ENCODE measurements at regions of chr5 and their contacts with region 1.

Region 1: DNA sequence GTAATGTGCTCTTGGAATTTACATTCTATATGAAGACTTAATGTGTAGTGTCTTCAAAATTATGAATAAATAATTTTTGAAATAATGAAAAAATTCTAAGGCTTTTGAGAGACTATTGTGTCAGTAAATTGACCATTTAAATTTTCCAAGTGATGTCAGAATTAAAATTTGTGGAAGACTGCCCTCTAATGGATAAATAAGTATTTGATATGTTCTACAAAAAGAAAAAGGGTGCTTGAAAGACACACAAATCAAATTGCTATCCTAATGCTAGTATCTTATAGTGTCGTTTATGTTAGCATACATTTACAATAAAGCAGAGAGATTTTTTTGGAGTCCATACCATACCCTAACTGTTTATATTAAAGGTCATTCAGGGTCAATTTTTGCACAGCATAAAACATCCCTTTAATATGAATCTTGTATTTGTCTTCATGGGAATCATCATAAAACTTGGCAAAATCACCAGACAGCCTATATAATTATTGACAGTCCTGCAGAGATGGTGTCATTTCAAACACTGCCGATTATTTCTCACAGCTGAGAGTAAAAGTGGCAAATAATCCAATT is 120.8 kb upstream of the SLC27A6 start:
- DNase-seq: no peak
- H3K4me3 ChIP-seq: no peak overlapping the region
- H3K4me3 Mint-ChIP-seq: no peak overlapping the region
- H3K27ac ChIP-seq: no peak overlapping the region
- H3K27ac Mint-ChIP-seq: no peak overlapping the region
- H3K4me1 ChIP-seq: no peaks in the 10 kb centered on the region
- H3K4me1 Mint-ChIP-seq: no peaks in the 10 kb centered on the region
- H3K27me3 ChIP-seq: no peaks in the 10 kb centered on the region
- H3K27me3 Mint-ChIP-seq: peaks cover 0 to 2% of the 10 kb centered on the region in 2 donors

Region 2: DNA sequence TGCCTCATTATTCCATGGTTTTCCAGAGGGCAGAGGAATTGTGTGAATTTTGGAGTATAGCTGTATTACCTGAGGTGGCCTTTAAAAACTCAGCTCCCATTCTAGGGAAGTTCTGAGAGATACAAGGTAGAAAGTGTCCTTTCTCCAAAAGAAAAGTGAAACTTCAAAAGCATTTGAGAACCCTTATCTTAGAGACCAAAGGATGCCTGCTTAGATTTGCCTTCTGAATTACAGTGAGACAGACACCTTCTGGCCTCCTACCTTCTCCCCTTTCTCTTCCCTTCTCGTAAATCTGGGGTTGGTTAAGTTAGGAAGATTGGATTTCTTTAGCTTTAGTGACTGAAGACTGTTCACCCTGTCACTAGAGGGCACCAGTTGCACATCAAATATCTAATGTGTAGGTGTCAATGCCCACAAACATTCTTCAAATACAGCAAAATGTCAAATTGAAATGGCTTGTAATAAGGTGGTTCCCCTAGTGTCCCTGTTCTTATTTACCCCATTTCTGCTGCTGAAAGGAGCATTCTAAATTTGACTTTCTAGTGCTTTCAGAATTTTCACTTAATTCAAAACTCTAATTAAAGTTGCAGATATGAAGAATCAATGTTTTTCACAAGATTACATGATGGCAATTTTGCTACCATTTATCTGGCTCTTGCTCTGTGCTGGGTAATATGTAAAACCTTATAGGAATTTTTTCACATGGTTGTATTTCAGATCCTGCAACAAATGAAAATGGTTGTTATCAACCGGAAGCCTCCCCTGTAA is 1280.3 kb before region 1 on chr5:
- CTCF ChIA-PET with region 1: no interaction called
- POLR2A ChIA-PET with region 1: no interaction called
- intact Hi-C with region 1: loop called (anchors 2 kb)
- DNase-seq: peak; percentile 42 to 57 (median 51)
- H3K4me3 ChIP-seq: no peak overlapping the region
- H3K4me3 Mint-ChIP-seq: no peak overlapping the region
- H3K27ac ChIP-seq: no peak overlapping the region
- H3K27ac Mint-ChIP-seq: no peak overlapping the region
- H3K4me1 ChIP-seq: no peaks in the 10 kb centered on the region
- H3K4me1 Mint-ChIP-seq: peaks cover 0 to 8% (median under 1%) of the 10 kb centered on the region in 4 donors
- H3K27me3 ChIP-seq: peaks cover 3% of the 10 kb centered on the region
- H3K27me3 Mint-ChIP-seq: peaks cover 4 to 27% of the 10 kb centered on the region in 2 donors

Region 3: DNA sequence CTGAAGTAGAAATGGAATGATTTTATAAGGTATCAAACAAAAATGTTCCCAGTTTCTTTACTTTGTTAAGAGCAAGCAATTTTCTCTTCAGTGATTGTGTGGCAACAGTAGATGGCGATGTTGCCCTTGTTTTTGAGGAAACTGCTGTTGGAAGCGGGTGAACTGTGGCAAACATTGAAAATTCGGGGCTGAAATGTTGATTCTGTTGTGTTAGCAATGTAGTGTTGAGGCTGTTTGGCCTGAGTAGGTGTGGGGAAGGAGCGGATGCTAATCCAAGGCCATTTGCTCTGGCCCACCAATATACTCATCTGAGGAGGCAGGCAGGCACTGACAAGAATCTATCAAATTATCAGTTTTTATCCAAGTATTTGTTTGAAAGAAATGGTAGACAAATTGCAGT is 631.1 kb before region 1 on chr5:
- CTCF ChIA-PET with region 1: no interaction called
- POLR2A ChIA-PET with region 1: no interaction called
- intact Hi-C with region 1: loop called (anchors 5 kb)
- DNase-seq: peak; percentile 21 to 43 (median 33)
- H3K4me3 ChIP-seq: no peak overlapping the region
- H3K4me3 Mint-ChIP-seq: no peak overlapping the region
- H3K27ac ChIP-seq: no peak overlapping the region
- H3K27ac Mint-ChIP-seq: no peak overlapping the region
- H3K4me1 ChIP-seq: no peaks in the 10 kb centered on the region
- H3K4me1 Mint-ChIP-seq: peaks cover 0 to 4% (median 1%) of the 10 kb centered on the region in 4 donors
- H3K27me3 ChIP-seq: no peaks in the 10 kb centered on the region
- H3K27me3 Mint-ChIP-seq: peaks cover 0 to 1% of the 10 kb centered on the region in 2 donors

Region 4: GRCh38 chr5:128649183-128649582 is 195.3 kb before region 1 on chr5:
- CTCF ChIA-PET with region 1: no interaction called
- POLR2A ChIA-PET with region 1: no interaction called
- intact Hi-C with region 1: no loop called
- DNase-seq: no peak
- H3K4me3 ChIP-seq: no peak overlapping the region
- H3K4me3 Mint-ChIP-seq: no peak overlapping the region
- H3K27ac ChIP-seq: no peak overlapping the region
- H3K27ac Mint-ChIP-seq: no peak overlapping the region
- H3K4me1 ChIP-seq: no peaks in the 10 kb centered on the region
- H3K4me1 Mint-ChIP-seq: no peaks in the 10 kb centered on the region
- H3K27me3 ChIP-seq: no peaks in the 10 kb centered on the region
- H3K27me3 Mint-ChIP-seq: no peaks in the 10 kb centered on the region

Region 5: DNA sequence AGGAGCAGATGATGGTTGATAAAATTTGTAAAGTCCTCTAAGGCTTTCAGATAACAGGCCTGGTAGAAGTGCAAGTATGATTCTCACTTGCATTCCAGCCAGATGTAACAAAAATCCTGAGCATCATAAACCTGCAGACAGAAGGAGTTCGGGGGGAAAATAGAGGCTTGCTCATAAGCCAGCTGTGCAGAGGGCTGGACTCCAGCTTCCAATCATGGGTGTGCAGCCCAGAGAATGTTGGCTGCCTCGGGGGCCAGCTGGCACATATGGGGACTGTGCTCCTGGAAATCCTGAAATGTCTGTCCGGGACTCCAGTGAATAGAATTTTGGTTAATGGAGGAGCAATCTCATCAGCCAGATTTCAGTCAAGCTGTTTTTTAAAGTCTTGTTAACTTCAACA is 79.5 kb before region 1 on chr5:
- CTCF ChIA-PET with region 1: no interaction called
- POLR2A ChIA-PET with region 1: no interaction called
- intact Hi-C with region 1: no loop called
- DNase-seq: no peak
- H3K4me3 ChIP-seq: no peak overlapping the region
- H3K4me3 Mint-ChIP-seq: no peak overlapping the region
- H3K27ac ChIP-seq: no peak overlapping the region
- H3K27ac Mint-ChIP-seq: no peak overlapping the region
- H3K4me1 ChIP-seq: no peaks in the 10 kb centered on the region
- H3K4me1 Mint-ChIP-seq: no peaks in the 10 kb centered on the region
- H3K27me3 ChIP-seq: no peaks in the 10 kb centered on the region
- H3K27me3 Mint-ChIP-seq: no peaks in the 10 kb centered on the region

Region 6: DNA sequence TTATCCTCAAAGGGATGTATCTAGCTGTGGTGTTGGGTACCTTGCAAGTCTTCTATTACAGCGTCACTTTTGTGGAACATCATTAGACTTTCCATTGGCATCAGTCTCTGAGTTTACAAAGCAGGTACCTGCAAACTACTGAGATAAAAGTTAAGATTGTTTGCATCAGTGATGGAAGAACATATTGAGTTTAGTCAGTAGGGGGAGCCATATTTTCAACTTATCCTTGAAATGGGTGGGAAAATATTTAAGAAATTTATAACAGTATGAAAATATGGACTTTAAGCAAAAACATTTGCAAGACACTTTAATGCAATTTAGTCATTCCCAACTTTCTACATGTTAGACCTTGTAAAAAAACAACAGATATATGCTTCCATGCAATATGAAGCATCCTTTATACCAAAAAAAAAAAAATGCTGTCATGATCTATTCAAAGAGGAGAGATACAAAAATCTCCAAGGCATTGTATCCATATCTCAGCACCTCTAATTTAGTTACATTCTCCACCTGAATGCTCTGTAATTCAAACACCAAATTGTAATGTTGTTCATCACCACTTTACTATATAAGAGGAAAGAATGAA is 517.1 kb after region 1 on chr5:
- CTCF ChIA-PET with region 1: no interaction called
- POLR2A ChIA-PET with region 1: no interaction called
- intact Hi-C with region 1: no loop called
- DNase-seq: no peak
- H3K4me3 ChIP-seq: no peak overlapping the region
- H3K4me3 Mint-ChIP-seq: no peak overlapping the region
- H3K27ac ChIP-seq: no peak overlapping the region
- H3K27ac Mint-ChIP-seq: no peak overlapping the region
- H3K4me1 ChIP-seq: no peaks in the 10 kb centered on the region
- H3K4me1 Mint-ChIP-seq: no peaks in the 10 kb centered on the region
- H3K27me3 ChIP-seq: no peaks in the 10 kb centered on the region
- H3K27me3 Mint-ChIP-seq: no peaks in the 10 kb centered on the region